ENCODE measurements at regions of chr16 and their contacts with region 1.

Region 1: GRCh38 chr16:67514382-67514828 is 14.2 kb upstream of the RIPOR1 start:
- DNase-seq: peak; percentile 59
- H3K27ac ChIP-seq: peak overlapping the region; percentile 50; the same call in 1 of the 2 replicates
- CTCF ChIP-seq: peak; percentile 71

Region 2: DNA sequence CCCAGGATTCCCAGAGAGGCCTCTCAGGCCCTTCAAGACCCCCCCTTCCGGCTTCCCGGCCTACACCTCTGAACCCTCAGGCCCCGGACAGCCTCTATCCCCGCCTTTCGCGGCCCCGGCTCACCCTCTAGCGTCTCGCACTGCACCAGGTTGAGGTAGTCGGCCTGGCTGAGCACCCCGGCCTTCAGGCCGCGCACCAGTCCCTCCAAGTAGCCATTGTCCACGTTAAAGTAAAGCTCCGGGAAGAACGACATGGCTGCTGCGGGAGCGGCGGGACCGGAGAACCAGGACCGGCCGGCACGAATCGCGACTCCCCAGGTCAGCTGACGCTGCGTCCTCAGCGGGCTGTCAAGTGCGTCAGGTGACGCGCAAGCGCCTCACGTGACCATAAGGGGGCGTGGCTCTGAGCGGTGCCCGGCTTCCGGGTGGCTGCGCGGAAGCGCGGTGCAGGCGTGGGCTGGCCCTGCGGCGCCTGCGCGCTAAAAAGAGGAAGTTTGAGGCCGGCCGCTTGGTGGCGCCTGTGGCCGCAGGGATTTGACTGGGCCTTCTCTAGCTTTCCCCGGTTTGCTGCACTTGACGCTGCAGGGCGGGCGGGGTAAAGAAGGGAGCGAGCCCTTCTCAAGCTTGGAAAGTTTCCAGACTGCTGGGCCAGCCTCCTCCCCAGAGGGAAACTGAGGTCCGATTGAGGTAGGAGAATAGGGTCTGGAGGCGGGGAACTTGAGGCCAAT is 33.4 kb before region 1 on chr16 and contains the start of gene ATP6V0D1:
- CTCF ChIA-PET with region 1: interaction called, 13 read pairs
- POLR2A ChIA-PET with region 1: no interaction called
- DNase-seq: peak; percentile 97
- H3K27ac ChIP-seq: peak within 1 kb of the TSS; percentile 83
- CTCF ChIP-seq: peak; percentile 90

Region 3: DNA sequence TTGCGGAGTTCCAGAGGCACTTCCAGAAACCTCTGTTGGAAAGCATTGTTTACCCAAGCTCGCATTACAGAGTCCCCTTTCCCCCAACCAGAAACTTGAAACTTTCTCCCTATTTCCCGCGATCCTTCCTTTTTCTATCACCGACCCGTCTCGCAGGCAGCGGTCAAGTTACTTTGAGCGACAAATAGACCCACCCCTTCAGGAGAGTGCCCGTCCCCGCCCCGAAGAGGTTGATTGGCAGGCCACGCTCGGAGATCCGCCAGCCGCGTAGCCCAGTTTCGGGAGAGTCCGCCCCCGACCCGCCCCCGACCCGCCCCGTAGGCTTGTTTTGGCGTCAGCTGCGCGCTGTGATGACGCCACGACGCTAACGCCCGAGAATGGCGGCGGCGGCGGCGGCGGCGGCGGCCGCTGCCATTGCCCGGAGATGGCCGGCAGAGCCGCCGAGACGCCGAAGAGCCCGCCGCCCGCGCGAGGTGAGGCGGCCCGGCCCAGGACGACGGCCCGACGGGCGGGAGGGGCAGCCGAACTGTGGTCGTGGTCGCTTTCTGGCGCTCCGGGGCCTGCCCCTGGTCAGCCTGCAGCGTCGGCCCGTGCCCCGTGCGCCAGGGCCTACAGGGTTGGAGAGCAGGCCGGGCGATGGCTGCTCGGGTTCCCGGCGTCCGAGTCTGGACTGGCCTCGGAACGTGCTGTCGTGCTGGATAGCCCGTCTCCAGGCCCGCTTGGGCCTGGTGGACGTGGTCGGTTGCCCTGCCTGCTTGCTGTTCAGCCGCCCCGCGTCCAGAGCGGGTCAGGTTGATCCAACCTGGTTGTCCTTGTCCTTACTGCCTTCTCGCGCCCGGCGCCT is 378.7 kb after region 1 on chr16 and contains the start of gene PSKH1:
- CTCF ChIA-PET with region 1: no interaction called
- POLR2A ChIA-PET with region 1: no interaction called
- DNase-seq: peak; percentile 100
- H3K27ac ChIP-seq: peak within 1 kb of the TSS; percentile 83
- CTCF ChIP-seq: no peak

Measured in RWPE1 (cell line).